Mucosa of descending colon (tissue), 3 donors: ENCODE measurements at regions of chr14 and their contacts with region 1.

Region 1: DNA sequence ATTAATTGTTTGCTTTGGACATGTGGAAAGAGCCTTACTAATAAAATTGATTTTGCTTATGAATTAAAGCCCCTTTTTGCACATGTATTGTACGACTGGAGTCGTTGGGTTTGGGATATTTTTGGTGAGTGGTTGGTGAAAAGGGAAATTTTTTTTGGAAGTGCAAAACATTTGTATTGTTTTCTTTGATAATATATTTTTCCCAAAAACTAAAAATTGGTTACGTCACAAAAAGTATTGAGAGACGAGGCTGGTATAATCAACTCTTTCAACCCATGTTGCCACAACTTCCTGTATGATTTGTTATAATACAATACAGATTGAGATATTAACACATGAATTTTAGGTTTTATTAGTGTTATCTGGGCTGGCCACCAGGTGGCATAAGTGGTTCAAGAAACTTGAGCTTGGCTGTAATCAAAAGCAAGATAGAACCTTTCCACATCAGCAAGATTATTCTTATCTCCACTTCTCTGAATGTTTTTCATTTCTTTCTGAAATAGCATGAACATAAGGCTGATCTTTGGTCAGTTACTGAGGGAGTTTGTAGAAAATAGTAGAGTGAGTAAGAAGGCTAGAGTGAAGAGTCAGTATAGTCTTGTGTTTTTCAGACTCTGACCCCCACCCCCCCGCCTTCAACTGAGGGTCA is 8.7 kb downstream of the NGDN start:
- DNase-seq: peak in 2 of 3 donors; percentile 36 to 79
- ATAC-seq: peak; percentile 68
- H3K4me3 ChIP-seq: no peak overlapping the region
- H3K4me1 ChIP-seq: no peaks in the 10 kb centered on the region
- CTCF ChIP-seq: no peak

Region 2: DNA sequence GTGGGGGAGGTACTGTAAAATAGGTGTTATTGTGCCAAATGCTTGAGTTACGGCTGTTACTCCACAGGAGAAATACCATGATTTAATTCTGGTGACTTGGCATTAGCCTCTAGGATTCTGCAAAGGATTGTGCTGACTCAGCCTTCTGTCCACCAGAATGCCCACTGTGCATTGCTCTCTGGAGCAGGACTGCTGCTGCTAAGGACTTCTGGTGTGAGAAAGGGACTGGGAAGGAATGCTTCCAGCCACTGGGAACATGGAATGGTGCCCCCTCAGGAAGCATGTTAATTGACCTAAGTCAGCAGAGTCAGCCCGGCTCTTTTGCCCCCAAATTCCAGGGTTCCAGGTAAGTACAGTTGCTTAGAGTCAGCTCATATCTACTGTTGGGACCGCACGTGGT is 40.5 kb after region 1 on chr14:
- intact Hi-C with region 1: no loop called
- DNase-seq: no peak
- ATAC-seq: no peak
- H3K4me3 ChIP-seq: no peak overlapping the region
- H3K4me1 ChIP-seq: no peaks in the 10 kb centered on the region
- CTCF ChIP-seq: no peak

Region 3: GRCh38 chr14:23562268-23563203 is 84.3 kb after region 1 on chr14:
- intact Hi-C with region 1: loop called (anchors 5 kb)
- DNase-seq: peak in 1 of 3 donors; percentile 56
- ATAC-seq: peak; percentile 29
- H3K4me3 ChIP-seq: no peak overlapping the region
- H3K4me1 ChIP-seq: peaks cover 4% of the 10 kb centered on the region
- CTCF ChIP-seq: peak; percentile 80